ENCODE measurements at regions of chr9 and their contacts with region 1.

Region 1: GRCh38 chr9:36337865-36338264 is 62.2 kb downstream of the RNF38 start:
- DNase-seq: no peak
- H3K4me3 ChIP-seq: no peak overlapping the region
- H3K4me3 Mint-ChIP-seq: no peak overlapping the region
- H3K27ac ChIP-seq: no peak overlapping the region
- H3K27ac Mint-ChIP-seq: peak overlapping the region in 1 of 7 donors; percentile 16
- H3K4me1 ChIP-seq: no peaks in the 10 kb centered on the region
- H3K4me1 Mint-ChIP-seq: no peaks in the 10 kb centered on the region
- H3K27me3 ChIP-seq: no peaks in the 10 kb centered on the region
- H3K27me3 Mint-ChIP-seq: no peaks in the 10 kb centered on the region

Region 2: GRCh38 chr9:35954942-35955546 is 382.8 kb before region 1 on chr9:
- CTCF ChIA-PET with region 1: no interaction called
- POLR2A ChIA-PET with region 1: no interaction called
- intact Hi-C with region 1: loop called (anchors 10 kb)
- DNase-seq: peak; percentile 43 to 68 (median 65)
- H3K4me3 ChIP-seq: no peak overlapping the region
- H3K4me3 Mint-ChIP-seq: peak overlapping the region in 1 of 8 donors; percentile 44
- H3K27ac ChIP-seq: no peak overlapping the region
- H3K27ac Mint-ChIP-seq: no peak overlapping the region
- H3K4me1 ChIP-seq: peaks cover 6% of the 10 kb centered on the region
- H3K4me1 Mint-ChIP-seq: peaks cover 5 to 7% (median 6%) of the 10 kb centered on the region in 4 donors
- H3K27me3 ChIP-seq: no peaks in the 10 kb centered on the region
- H3K27me3 Mint-ChIP-seq: peaks cover 4 to 9% of the 10 kb centered on the region in 2 donors

Region 3: GRCh38 chr9:36320466-36320865 is 17.4 kb before region 1 on chr9:
- CTCF ChIA-PET with region 1: no interaction called
- POLR2A ChIA-PET with region 1: no interaction called
- intact Hi-C with region 1: no loop called
- DNase-seq: no peak
- H3K4me3 ChIP-seq: no peak overlapping the region
- H3K4me3 Mint-ChIP-seq: no peak overlapping the region
- H3K27ac ChIP-seq: no peak overlapping the region
- H3K27ac Mint-ChIP-seq: no peak overlapping the region
- H3K4me1 ChIP-seq: no peaks in the 10 kb centered on the region
- H3K4me1 Mint-ChIP-seq: peaks cover 0 to 2% (median 0%) of the 10 kb centered on the region in 4 donors
- H3K27me3 ChIP-seq: no peaks in the 10 kb centered on the region
- H3K27me3 Mint-ChIP-seq: peaks cover 0 to 3% of the 10 kb centered on the region in 2 donors